Posterior cingulate gyrus (tissue), 11 donors: ENCODE measurements at regions of chrX and their contacts with region 1.

Region 1: GRCh38 chrX:136147315-136147901 is at the start of gene FHL1:
- DNase-seq: peak in 9 of 10 donors; percentile 30 to 93 (median 55)

Region 2: DNA sequence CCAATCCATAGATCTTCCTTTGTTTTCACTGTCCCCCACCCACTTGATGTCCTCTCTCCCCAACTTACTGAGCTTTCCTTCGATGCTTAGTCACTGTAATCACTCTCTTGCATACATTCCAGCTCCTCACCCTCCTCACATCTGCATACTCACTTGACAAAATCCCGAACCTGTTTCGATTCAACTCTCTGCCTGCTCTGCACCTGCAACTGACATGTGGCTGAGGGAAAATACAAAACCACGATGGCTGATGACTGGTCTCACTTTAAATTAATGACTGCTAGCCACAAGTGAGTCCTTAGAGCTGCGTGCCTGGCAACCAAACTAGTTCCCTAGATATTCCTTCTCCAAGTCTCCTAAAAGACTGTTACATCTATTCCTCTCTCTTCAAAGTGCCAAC is 70.5 kb before region 1 on chrX:
- intact Hi-C with region 1: loop called (anchors 10 kb)
- DNase-seq: no peak

Region 3: DNA sequence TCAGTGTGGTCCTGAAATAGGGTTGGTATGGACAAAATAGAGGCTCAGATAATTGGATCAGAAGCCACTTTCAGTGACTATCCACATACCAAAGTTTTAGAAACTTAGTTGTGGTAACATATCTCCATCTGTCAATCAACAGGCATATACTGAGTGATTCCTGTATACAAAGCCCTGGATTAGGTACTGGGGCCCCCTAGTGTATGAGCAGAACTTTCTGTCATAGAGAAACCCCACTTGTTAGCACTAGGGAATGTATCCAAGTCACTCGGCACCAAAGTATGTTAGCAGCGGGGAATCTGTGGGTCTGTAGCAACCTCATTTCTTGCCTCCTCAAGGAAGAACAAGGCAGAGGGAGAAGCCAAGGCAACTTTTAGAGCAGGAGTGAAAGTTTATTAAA is 53.1 kb after region 1 on chrX:
- intact Hi-C with region 1: no loop called
- DNase-seq: no peak

Region 4: GRCh38 chrX:136369377-136369776 is 222.0 kb after region 1 on chrX:
- intact Hi-C with region 1: no loop called
- DNase-seq: no peak

Region 5: DNA sequence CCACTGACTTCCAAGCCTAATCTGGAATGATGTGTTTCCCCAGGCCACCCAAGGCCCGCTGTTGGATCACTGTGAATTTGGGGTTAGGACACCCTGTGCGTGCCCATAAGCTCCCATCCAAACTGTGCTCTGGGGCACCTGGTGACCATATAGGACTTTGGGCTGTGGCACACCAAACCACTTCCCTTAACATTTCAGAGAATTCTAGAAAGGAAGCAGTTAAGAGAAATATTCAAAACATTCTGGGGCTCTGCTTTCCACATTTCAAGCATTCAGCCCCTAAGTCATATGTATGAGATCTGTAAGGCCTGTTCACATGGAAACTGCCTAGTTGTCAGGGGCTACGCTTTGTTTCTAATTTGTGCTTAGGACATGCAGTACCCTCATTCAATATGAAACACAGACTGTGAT is 399.0 kb after region 1 on chrX:
- intact Hi-C with region 1: no loop called
- DNase-seq: no peak